AG04450 (cell line): ENCODE measurements at regions of chr6 and their contacts with region 1.

Region 1: GRCh38 chr6:30717042-30717844 is at the start of gene MDC1:
- DNase-seq: peak; percentile 100
- H3K4me3 ChIP-seq: peak within 1 kb of the TSS; percentile 85
- H3K27ac ChIP-seq: peak within 1 kb of the TSS; percentile 95
- H3K27me3 ChIP-seq: no peaks in the 10 kb centered on the region
- CTCF ChIP-seq: peak; percentile 35
- polyA plus RNA-seq, gene MDC1: 4.1 and 6.8 TPM in 2 replicates

Region 2: DNA sequence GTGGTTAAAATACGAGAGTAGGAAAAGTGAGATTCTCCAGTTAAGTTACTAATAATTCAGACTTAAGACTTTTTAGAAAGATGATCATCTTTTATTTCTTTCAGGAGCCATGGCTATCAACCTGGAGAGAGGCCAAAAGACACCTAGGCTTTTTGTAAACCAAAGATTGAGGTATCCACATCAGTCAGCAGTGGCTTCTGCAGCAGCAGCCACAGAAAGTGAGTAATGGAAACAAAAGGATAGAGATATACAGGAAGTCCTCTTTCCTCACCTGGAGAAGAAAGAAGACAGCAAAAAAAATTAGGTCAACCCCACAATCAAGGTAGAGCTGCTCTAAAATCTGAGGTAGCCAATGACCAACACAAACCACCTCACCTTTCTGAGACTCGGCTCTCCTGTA is 413.2 kb before region 1 on chr6:
- CTCF ChIA-PET with region 1: no interaction called
- POLR2A ChIA-PET with region 1: no interaction called
- DNase-seq: no peak
- H3K4me3 ChIP-seq: no peak overlapping the region
- H3K27ac ChIP-seq: no peak overlapping the region
- H3K27me3 ChIP-seq: no peaks in the 10 kb centered on the region
- CTCF ChIP-seq: no peak

Region 3: GRCh38 chr6:30590994-30591393 is 126.2 kb before region 1 on chr6:
- CTCF ChIA-PET with region 1: interaction called, 3 read pairs
- POLR2A ChIA-PET with region 1: interaction called, 12 read pairs
- DNase-seq: peak; percentile 48
- H3K4me3 ChIP-seq: no peak overlapping the region
- H3K27ac ChIP-seq: peak overlapping the region; percentile 66
- H3K27me3 ChIP-seq: no peaks in the 10 kb centered on the region
- CTCF ChIP-seq: no peak

Region 4: DNA sequence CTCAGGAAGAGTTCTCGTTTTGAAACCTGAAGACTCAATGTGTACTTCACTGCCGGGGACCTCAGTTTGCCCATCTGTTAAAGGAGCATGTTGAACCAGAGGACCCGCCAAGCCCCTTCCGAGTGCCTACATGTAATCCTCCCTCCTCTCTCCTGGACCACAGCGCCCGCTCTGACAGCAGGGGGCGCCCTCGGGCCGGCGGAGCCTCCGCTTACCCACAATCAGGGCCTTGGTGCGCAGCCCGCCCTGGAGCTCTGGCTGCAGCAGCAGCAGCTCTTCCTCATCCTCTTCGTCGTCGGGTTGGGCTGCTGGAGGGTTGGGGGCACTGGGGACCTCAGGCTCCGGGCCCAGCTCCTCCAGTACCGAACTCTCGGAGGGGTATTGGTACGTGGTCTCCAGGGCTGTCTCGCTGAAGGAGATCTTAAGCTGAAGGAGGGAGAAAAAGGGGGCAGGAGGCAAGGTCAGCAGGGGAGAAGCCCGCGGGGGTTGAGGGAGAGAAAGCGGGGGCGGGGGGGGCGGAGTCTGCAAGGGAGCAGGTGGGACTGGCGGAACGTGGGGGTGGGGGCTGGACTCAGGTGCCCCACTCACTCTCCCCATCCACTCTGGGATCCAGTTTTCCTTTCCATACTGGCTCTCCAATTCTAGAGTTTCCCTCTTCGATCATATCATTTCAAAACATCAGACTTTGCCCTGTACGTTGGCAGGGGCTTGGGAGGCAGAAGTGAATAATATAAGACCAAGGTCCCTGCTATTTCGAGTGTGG is 38.1 kb before region 1 on chr6:
- CTCF ChIA-PET with region 1: interaction called, 105 read pairs
- POLR2A ChIA-PET with region 1: interaction called, 20 read pairs
- DNase-seq: no peak
- H3K4me3 ChIP-seq: peak overlapping the region; percentile 45
- H3K27ac ChIP-seq: peak overlapping the region; percentile 39
- H3K27me3 ChIP-seq: no peaks in the 10 kb centered on the region
- CTCF ChIP-seq: peak; percentile 95

Region 5: GRCh38 chr6:30730601-30731435 is 13.6 kb after region 1 on chr6:
- CTCF ChIA-PET with region 1: interaction called, 21 read pairs
- POLR2A ChIA-PET with region 1: interaction called, 7 read pairs
- DNase-seq: no peak
- H3K4me3 ChIP-seq: no peak overlapping the region
- H3K27ac ChIP-seq: no peak overlapping the region
- H3K27me3 ChIP-seq: no peaks in the 10 kb centered on the region
- CTCF ChIP-seq: peak; percentile 50; the same call in 1 of the 2 replicates

Region 6: GRCh38 chr6:30828027-30828960 is 111.1 kb after region 1 on chr6:
- CTCF ChIA-PET with region 1: interaction called, 10 read pairs
- POLR2A ChIA-PET with region 1: no interaction called
- DNase-seq: peak; percentile 84
- H3K4me3 ChIP-seq: no peak overlapping the region
- H3K27ac ChIP-seq: peak overlapping the region; percentile 78
- H3K27me3 ChIP-seq: no peaks in the 10 kb centered on the region
- CTCF ChIP-seq: peak; percentile 97